ENCODE measurements at regions of chr6 and their contacts with region 1.

Region 1: GRCh38 chr6:31597006-31597405 is 4.2 kb upstream of the NCR3 start:
- DNase-seq: no peak

Region 2: GRCh38 chr6:31546962-31547726 is 49.9 kb before region 1 on chr6 and contains the start of gene NFKBIL1:
- intact Hi-C with region 1: loop called (anchors 1 kb)
- DNase-seq: peak; percentile 96 to 99 (median 98)

Region 3: DNA sequence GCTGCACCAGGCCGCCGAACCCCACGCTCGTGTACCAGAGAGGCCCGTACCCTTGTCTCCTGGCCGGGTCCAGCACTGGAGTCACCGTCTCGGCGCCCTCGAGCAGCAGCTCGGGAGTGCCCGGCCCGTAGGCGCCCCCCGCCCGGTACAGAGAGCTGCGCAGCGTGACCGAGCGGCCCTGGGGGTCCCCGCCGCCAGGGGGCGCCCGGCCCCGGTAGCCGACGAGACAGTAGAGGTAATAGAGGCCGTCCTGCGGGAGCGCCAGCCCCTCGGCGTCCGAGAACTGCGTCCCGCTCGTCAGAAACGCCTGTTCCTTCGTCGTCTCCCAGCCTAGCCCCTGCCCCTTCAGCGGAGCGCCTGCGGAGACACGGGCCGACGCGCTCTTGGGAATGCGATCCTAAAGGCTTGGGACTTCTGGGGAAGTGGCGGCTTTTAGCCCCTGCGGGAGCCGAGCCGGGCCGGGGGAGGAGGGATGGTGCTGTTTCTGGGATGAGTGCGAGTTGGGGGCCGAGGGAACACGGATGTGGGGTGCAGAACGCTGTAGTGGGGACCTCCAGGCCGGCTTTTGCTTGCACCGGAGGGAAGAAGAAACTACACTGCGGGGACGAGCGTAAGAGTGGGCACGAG is 16.1 kb before region 1 on chr6:
- intact Hi-C with region 1: loop called (anchors 2 kb)
- DNase-seq: peak; percentile 74 to 98 (median 88)